Gastrocnemius medialis (tissue), 4 donors: ENCODE measurements at regions of chr17 and their contacts with region 1.

Region 1: GRCh38 chr17:82528484-82529265 is 9.1 kb downstream of the FOXK2 start:
- DNase-seq: peak; percentile 83 to 92
- ATAC-seq: peak; percentile 87 to 93
- H3K4me3 ChIP-seq: peak overlapping the region in 3 of 4 donors; percentile 6 to 22 (median 7)
- H3K27ac ChIP-seq: peak overlapping the region; percentile 80 to 92 (median 88)
- H3K4me1 ChIP-seq: peaks cover 87 to 88% of the 10 kb centered on the region in 2 donors
- H3K27me3 ChIP-seq: no peaks in the 10 kb centered on the region
- CTCF ChIP-seq: peak; percentile 38 to 61 (median 42)
- POLR2A ChIP-seq: no peak

Region 2: GRCh38 chr17:82486186-82487094 is 42.2 kb before region 1 on chr17:
- in situ Hi-C with region 1: no loop called
- intact Hi-C with region 1: no loop called
- DNase-seq: no peak
- ATAC-seq: no peak
- H3K4me3 ChIP-seq: no peak overlapping the region
- H3K27ac ChIP-seq: no peak overlapping the region
- H3K4me1 ChIP-seq: peaks cover 5 to 12% of the 10 kb centered on the region in 2 donors
- H3K27me3 ChIP-seq: no peaks in the 10 kb centered on the region
- CTCF ChIP-seq: no peak
- POLR2A ChIP-seq: no peak

Region 3: GRCh38 chr17:82551779-82552457 is 23.2 kb after region 1 on chr17:
- in situ Hi-C with region 1: no loop called
- intact Hi-C with region 1: no loop called
- DNase-seq: peak; percentile 54 to 76
- ATAC-seq: peak; percentile 55 to 65
- H3K4me3 ChIP-seq: no peak overlapping the region
- H3K27ac ChIP-seq: peak overlapping the region; percentile 1 to 73 (median 69)
- H3K4me1 ChIP-seq: peaks cover 60 to 68% of the 10 kb centered on the region in 2 donors
- H3K27me3 ChIP-seq: no peaks in the 10 kb centered on the region
- CTCF ChIP-seq: peak; percentile 65 to 85 (median 76)
- POLR2A ChIP-seq: no peak

Region 4: DNA sequence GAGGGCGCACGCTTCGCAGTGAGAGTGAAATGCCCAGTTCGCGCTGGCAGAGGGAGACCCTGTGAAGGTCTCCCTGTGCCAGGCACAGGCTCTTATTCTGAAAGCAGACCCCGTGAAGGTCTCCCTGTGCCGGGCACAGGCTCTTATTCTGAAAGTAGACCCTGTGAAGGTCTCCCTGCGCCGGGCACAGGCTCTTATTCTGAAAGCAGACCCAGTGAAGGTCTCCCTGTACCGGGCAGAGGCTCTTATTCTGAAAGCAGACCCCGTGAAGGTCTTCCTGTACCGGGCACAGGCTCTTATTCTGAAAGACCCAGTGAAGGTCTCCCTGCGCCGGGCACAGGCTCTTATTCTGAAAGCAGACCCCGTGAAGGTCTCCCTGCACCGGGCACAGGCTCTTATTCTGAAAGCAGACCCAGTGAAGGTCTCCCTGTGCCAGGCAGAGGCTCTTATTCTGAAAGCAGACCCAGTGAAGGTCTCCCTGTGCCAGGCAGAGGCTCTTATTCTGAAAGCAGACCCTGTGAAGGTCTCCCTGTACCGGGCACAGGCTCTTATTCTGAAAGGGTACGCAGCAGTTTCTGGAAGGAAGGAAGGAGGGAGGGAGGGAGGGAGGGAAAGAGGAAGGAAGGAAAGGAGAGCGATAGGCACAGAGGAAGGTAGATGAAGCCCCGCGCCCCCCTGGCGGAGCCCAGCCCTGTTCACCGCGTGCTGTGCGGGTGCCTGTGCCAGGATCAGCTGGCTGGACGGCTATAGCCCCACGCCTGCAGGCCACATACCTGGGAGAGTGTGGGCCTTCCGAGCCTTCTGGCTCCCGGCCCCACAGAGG is 64.3 kb after region 1 on chr17:
- in situ Hi-C with region 1: no loop called
- intact Hi-C with region 1: loop called (anchors 2 kb)
- DNase-seq: peak; percentile 67 to 87
- ATAC-seq: peak; percentile 72 to 84
- H3K4me3 ChIP-seq: peak overlapping the region; percentile 60 to 80 (median 70)
- H3K27ac ChIP-seq: peak overlapping the region; percentile 87 to 92 (median 88)
- H3K4me1 ChIP-seq: peaks cover 26 to 31% of the 10 kb centered on the region in 2 donors
- H3K27me3 ChIP-seq: no peaks in the 10 kb centered on the region
- CTCF ChIP-seq: no peak
- POLR2A ChIP-seq: no peak